ENCODE measurements at regions of chr7 and their contacts with region 1.

Region 1: GRCh38 chr7:142811154-142811737 is 40.5 kb downstream of the PRSS2 start:
- DNase-seq: no peak
- ATAC-seq: no peak
- H3K4me3 ChIP-seq: no peak overlapping the region
- H3K27ac ChIP-seq: no peak overlapping the region
- H3K4me1 ChIP-seq: no peaks in the 10 kb centered on the region
- H3K27me3 ChIP-seq: peaks cover 3% of the 10 kb centered on the region

Region 2: GRCh38 chr7:142632291-142633134 is 178.7 kb before region 1 on chr7:
- intact Hi-C with region 1: loop called in 2 of 4 experiments (anchors 5 to 10 kb)
- DNase-seq: peak; percentile 23 to 67 (median 39)
- ATAC-seq: peak; percentile 45 to 76
- H3K4me3 ChIP-seq: no peak overlapping the region
- H3K27ac ChIP-seq: no peak overlapping the region
- H3K4me1 ChIP-seq: no peaks in the 10 kb centered on the region
- H3K27me3 ChIP-seq: no peaks in the 10 kb centered on the region